Left ventricle myocardium inferior (tissue), 1 donor: ENCODE measurements at regions of chr21 and their contacts with region 1.

Region 1: GRCh38 chr21:26715878-26716506 is 129.2 kb downstream of the ADAMTS1 start:
- DNase-seq: peak; percentile 15
- H3K4me3 ChIP-seq: no peak overlapping the region
- H3K27ac ChIP-seq: no peak overlapping the region
- H3K4me1 ChIP-seq: peaks cover 5% of the 10 kb centered on the region
- H3K27me3 ChIP-seq: no peaks in the 10 kb centered on the region
- CTCF ChIP-seq: peak; percentile 89

Region 2: GRCh38 chr21:25881525-25882376 is 834.2 kb before region 1 on chr21:
- intact Hi-C with region 1: loop called (anchors 10 kb)
- DNase-seq: peak; percentile 53
- H3K4me3 ChIP-seq: no peak overlapping the region
- H3K27ac ChIP-seq: no peak overlapping the region
- H3K4me1 ChIP-seq: peaks cover 18% of the 10 kb centered on the region
- H3K27me3 ChIP-seq: no peaks in the 10 kb centered on the region
- CTCF ChIP-seq: peak; percentile 97

Region 3: GRCh38 chr21:26909972-26910371 is 194.0 kb after region 1 on chr21:
- intact Hi-C with region 1: no loop called
- DNase-seq: no peak
- H3K4me3 ChIP-seq: no peak overlapping the region
- H3K27ac ChIP-seq: no peak overlapping the region
- H3K4me1 ChIP-seq: no peaks in the 10 kb centered on the region
- H3K27me3 ChIP-seq: no peaks in the 10 kb centered on the region
- CTCF ChIP-seq: peak; percentile 29